Vagina (tissue), 2 donors: ENCODE measurements at regions of chr12 and their contacts with region 1.

Region 1: DNA sequence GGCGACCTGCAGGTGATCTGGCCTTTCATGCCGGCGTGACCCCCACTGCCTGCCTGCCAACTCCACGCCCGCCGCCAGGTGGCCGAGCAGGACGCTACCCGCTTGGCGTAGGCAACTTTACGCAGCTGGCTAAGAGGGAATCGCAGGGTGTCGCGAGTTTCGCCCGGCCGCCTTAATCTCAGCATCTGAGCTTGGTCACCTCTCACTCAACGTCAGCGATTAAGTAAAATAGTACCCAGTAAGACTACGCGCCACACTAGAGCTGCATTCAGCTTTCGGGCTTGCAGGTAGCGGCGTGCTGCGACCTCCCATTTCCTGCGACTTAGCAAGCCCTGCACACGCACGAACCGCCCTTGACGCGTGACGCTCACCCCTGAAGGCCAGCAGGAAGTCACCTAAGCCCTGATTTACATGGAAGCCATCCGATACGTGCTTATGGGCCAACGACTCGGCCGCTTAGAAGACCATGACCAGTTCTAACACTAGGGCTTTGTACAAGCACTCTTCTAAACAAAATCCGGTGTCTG is 33.2 kb downstream of the WBP11 start:
- DNase-seq: peak in 1 of 2 donors; percentile 92
- H3K4me3 ChIP-seq: peak overlapping the region; percentile 67 to 82
- H3K27ac ChIP-seq: peak overlapping the region; percentile 94
- H3K4me1 ChIP-seq: peaks cover 24% of the 10 kb centered on the region
- H3K27me3 ChIP-seq: no peaks in the 10 kb centered on the region
- CTCF ChIP-seq: peak; percentile 58 to 83 (median 65)
- POLR2A ChIP-seq: peak in 1 of 2 donors; percentile 9

Region 2: GRCh38 chr12:14884458-14884878 is 114.4 kb after region 1 on chr12:
- intact Hi-C with region 1: loop called (anchors 10 kb)
- DNase-seq: no peak
- H3K4me3 ChIP-seq: peak overlapping the region; percentile 39
- H3K27ac ChIP-seq: peak overlapping the region; percentile 85
- H3K4me1 ChIP-seq: peaks cover 13% of the 10 kb centered on the region
- H3K27me3 ChIP-seq: no peaks in the 10 kb centered on the region
- CTCF ChIP-seq: no peak
- POLR2A ChIP-seq: no peak

Region 3: DNA sequence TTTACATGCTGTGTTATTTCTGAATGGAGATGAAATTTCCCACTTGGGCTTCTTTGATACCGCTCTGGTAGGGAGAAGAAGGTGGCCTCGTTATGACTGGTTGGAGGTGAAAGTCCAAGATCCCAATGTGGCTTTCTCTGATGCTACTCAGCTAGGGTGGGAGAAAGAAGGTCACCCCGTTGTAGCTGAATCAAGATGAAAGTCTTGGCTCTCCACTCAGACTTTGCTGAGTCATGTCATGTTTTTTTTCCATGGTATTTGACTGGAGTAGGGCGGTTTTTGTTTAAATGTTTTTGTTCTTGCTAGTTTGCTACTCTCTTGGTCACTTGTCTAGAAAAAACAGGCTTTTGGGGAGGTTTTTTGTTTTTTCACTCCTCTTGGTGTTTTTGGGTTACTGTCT is 200.4 kb after region 1 on chr12:
- intact Hi-C with region 1: no loop called
- DNase-seq: no peak
- H3K4me3 ChIP-seq: no peak overlapping the region
- H3K27ac ChIP-seq: no peak overlapping the region
- H3K4me1 ChIP-seq: no peaks in the 10 kb centered on the region
- H3K27me3 ChIP-seq: no peaks in the 10 kb centered on the region
- CTCF ChIP-seq: no peak
- POLR2A ChIP-seq: no peak

Region 4: DNA sequence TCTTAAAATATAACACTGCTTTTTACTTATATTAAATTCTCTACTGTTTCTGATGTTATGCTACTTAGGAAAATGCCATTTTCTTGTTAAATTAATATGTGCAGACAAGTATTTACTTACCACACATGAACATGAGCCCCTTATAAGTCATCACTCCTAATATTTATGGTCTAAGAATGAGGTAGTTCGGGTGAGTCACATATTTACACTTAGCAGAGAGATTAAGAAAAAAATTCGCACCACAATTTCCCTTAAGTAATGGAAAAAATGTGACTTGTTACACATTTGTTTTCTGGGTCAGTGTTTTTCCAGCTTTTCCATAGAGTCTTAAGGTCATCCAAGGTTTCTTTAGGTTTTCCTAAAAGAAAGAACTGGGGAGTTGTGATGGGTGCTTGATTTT is 382.8 kb after region 1 on chr12:
- intact Hi-C with region 1: no loop called
- DNase-seq: no peak
- H3K4me3 ChIP-seq: no peak overlapping the region
- H3K27ac ChIP-seq: peak overlapping the region; percentile 73
- H3K4me1 ChIP-seq: peaks cover 47% of the 10 kb centered on the region
- H3K27me3 ChIP-seq: no peaks in the 10 kb centered on the region
- CTCF ChIP-seq: no peak
- POLR2A ChIP-seq: no peak